Activated T-helper 1 cell treated with anti-CD3 and anti-CD28 coated beads, Interleukin-12 subunit alpha, Interleukin-12 subunit beta, Interleukin-2, Interleukin-4 antibody, amounts not matched to agents 30 ng/mL and 10 ng/mL and 1 ng/mL, durations not matched to agents 14 hours and 24 hours and 36 hours (primary cell): ENCODE measurements at regions of chr11 and their contacts with region 1.

Region 1: DNA sequence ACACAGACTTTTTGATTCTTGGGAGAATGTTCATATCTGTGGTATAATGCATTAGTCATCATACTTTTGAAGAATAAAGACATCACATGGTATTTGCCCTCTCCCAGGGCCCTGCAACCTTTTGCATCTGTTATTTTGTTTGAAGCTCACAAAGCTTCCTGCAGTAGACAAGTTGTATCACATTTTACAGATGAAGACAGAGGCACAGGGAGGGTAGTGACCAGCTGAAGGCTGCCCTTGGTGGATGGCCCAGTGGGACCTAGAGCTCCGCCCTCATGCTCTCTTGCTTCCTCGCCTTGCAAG is 66.4 kb downstream of the UBASH3B start:
- DNase-seq: no peak
- H3K4me3 Mint-ChIP-seq: no peak overlapping the region
- H3K27ac Mint-ChIP-seq: no peak overlapping the region
- H3K4me1 Mint-ChIP-seq: peaks cover 50% of the 10 kb centered on the region
- H3K27me3 Mint-ChIP-seq: peaks cover 12% of the 10 kb centered on the region

Region 2: DNA sequence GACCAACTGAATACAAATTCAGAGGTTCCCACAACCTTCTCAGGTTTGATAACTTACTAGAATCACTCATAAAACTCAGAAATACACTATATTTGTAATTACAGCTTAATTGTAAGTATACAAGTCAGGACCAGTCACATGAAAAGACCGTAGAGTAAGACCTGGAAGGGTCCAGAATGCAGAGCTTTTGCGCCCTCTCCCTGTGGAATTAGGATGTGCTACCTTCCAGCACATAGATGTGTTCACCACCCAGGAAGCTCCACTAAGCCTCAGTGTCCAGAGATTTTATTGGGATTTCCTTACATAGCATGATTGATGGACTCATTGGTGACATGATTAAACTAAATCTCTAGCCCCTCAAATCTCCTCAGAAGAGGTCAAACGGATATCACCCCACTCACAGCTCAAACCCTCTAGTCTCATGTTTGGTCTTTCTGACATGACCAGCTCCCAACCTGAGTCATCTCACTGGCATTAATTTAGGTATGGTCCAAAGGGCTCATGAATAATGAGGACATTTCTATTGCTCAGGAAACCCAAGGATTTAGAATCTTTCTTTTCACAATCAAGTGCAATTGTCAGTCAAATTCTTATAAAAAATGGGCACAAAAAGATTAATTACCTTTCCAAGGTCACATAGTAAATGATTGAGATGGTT is 143.6 kb before region 1 on chr11:
- intact Hi-C with region 1: no loop called
- DNase-seq: no peak
- H3K4me3 Mint-ChIP-seq: no peak overlapping the region
- H3K27ac Mint-ChIP-seq: no peak overlapping the region
- H3K4me1 Mint-ChIP-seq: peaks cover 12% of the 10 kb centered on the region
- H3K27me3 Mint-ChIP-seq: peaks cover 7% of the 10 kb centered on the region

Region 3: GRCh38 chr11:122655527-122656072 is 66.3 kb before region 1 on chr11 and contains the start of gene UBASH3B:
- intact Hi-C with region 1: loop called (anchors 1 kb)
- DNase-seq: peak; percentile 48
- H3K4me3 Mint-ChIP-seq: peak within 1 kb of the TSS; percentile 94
- H3K27ac Mint-ChIP-seq: peak within 1 kb of the TSS; percentile 88
- H3K4me1 Mint-ChIP-seq: peaks cover 13% of the 10 kb centered on the region
- H3K27me3 Mint-ChIP-seq: peaks cover 65% of the 10 kb centered on the region
- total RNA-seq, gene UBASH3B: 17.9 and 18.3 TPM in 2 replicates

Region 4: DNA sequence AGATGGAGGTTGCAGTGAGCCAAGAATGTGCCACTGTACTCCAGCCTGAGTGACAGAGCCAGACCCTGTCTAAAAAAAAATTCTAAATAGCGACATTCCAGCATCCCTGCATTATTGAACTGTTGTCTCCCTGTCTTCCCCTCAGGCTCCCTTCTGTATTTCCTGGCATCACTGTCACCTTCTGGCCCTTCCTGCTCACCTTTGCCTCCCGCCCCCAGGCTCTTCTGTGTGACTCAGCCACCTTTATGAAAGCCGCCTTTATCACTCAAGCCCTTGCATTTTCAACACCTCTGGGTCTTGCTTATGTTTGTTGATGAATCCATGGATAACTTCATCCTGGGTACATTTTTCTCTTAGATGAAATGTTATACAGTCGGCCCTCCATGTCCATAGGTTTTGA is 45.3 kb before region 1 on chr11:
- intact Hi-C with region 1: no loop called
- DNase-seq: no peak
- H3K4me3 Mint-ChIP-seq: peak overlapping the region; percentile 11
- H3K27ac Mint-ChIP-seq: peak overlapping the region; percentile 65
- H3K4me1 Mint-ChIP-seq: peaks cover 24% of the 10 kb centered on the region
- H3K27me3 Mint-ChIP-seq: peaks cover 14% of the 10 kb centered on the region

Region 5: DNA sequence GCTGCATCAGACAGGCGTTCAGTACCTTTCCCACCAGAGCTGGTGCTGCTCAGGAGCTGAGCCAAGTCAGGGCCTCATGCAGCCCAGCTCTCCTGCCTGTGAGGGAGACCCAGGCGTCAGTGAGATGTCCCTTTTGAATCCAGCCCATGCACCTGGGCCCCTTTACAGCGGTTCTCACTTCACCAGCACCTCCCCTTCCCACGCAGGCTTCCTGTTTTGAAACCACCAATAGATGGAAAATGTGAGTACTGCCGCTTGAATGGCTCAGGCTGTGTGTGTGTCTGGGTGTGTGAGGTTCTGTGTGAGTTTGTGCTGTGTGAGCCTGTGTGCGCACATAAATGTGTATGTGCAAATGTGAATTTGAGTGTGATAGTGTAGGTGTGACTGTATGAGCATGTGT is 22.0 kb after region 1 on chr11:
- intact Hi-C with region 1: loop called (anchors 1 kb)
- DNase-seq: peak; percentile 75
- H3K4me3 Mint-ChIP-seq: no peak overlapping the region
- H3K27ac Mint-ChIP-seq: no peak overlapping the region
- H3K4me1 Mint-ChIP-seq: no peaks in the 10 kb centered on the region
- H3K27me3 Mint-ChIP-seq: peaks cover 18% of the 10 kb centered on the region

Region 6: DNA sequence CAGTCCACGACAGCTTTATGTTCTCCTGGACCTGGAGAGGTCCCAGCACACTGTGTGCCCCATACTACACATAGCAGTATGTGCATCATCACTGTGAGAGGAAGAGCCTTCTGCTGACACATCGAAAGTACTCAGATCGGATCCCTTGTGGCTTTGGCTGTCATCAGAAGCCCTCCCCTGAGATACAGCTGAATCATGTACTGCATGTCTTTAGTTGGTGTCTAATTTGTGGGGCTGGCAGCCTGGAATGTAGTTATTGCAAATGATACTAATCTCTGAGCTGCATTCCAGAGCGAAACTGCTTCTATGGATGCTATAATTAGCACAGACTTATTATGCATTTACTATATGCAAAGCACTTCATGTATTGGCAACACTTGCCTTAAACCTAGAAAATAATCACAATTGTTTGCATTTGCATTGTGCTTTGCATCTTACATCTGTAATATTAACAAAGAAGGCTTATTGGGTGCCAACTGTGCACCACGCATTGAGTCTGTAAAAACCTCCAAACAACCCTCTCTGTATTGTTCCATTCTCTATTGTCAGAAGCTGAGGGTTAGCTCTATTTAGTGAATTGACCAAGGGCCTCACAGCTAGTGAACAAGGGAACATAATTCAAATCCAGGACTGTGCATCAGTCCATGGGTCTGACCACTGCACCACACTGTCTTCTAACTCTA is 27.2 kb after region 1 on chr11:
- intact Hi-C with region 1: loop called (anchors 1 kb)
- DNase-seq: peak; percentile 50
- H3K4me3 Mint-ChIP-seq: no peak overlapping the region
- H3K27ac Mint-ChIP-seq: peak overlapping the region; percentile 5
- H3K4me1 Mint-ChIP-seq: peaks cover 20% of the 10 kb centered on the region
- H3K27me3 Mint-ChIP-seq: peaks cover 10% of the 10 kb centered on the region

Region 7: DNA sequence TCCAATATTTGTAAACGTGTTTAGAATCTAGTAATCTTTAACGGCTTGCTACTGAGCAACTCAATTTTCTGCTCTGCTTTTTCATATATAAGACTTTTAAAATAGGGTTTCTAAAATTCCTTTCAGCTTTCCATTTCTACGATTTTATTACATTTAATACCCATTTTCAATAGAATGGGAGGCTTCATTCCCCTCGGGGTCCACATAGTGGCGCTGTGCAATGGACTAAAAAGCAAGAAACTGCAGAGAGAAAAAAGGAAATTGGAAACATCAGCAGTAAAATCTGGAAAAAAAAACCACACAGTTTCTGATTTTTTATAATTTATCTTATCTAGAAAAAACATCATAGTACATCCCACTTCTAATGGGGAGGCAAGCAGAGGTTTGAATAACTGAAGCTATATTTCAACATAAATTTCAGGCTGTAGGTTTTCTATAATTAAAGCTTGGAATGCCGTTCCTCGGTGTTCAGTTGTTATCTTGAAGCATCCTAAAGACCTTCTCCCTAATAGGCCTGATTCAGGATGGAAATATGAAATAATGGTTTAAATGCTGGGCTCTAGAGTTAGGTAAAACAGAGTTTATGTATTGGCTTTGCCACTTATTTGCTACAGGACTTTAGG is 141.9 kb after region 1 on chr11:
- intact Hi-C with region 1: no loop called
- DNase-seq: no peak
- H3K4me3 Mint-ChIP-seq: no peak overlapping the region
- H3K27ac Mint-ChIP-seq: no peak overlapping the region
- H3K4me1 Mint-ChIP-seq: no peaks in the 10 kb centered on the region
- H3K27me3 Mint-ChIP-seq: peaks cover 47% of the 10 kb centered on the region